ENCODE measurements at regions of chr12 and their contacts with region 1.

Region 1: GRCh38 chr12:95532851-95533250 is 18.4 kb downstream of the USP44 start:
- DNase-seq: peak; percentile 33
- H3K4me3 Mint-ChIP-seq: no peak overlapping the region
- H3K27ac Mint-ChIP-seq: no peak overlapping the region
- H3K4me1 Mint-ChIP-seq: peaks cover 8% of the 10 kb centered on the region
- H3K27me3 Mint-ChIP-seq: no peaks in the 10 kb centered on the region

Region 2: DNA sequence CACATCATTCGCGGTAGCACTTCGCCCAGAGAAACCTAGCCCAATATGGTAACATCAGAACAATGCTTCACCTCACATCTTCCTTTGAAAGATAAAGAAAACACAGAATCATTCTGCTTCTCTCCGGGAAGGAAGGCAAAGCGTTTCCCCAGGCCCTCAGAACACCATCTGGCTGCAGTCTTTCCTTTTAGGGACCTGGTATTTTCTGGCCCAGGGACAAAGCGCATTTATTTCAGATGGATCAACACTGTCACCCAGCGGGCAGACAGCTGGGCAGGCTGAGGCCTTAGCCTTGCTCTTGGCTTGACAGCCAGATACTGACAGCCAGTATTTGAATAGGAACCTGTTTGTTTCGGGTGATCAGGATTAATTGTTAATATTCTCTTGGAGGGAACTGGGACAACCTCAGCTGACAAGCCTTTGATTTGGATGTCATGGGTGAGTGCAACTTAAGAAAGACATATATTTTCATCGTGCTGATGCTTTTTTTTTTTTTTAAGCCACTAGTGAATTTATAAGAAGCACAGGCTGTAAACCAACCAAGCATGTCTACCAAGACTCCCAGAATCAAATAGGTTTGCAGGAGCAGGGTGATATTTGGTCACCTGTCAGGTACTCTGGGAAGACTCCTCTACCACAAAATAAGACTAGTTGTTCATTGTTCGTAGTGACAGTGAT is 196.3 kb before region 1 on chr12:
- CTCF ChIA-PET with region 1: interaction called, 4 read pairs
- POLR2A ChIA-PET with region 1: no interaction called
- intact Hi-C with region 1: loop called (anchors 10 kb)
- DNase-seq: no peak
- H3K4me3 Mint-ChIP-seq: no peak overlapping the region
- H3K27ac Mint-ChIP-seq: no peak overlapping the region
- H3K4me1 Mint-ChIP-seq: peaks cover 3% of the 10 kb centered on the region
- H3K27me3 Mint-ChIP-seq: peaks cover 2% of the 10 kb centered on the region

Region 3: GRCh38 chr12:95548539-95549391 is 15.9 kb after region 1 on chr12:
- CTCF ChIA-PET with region 1: interaction called, 12 read pairs
- POLR2A ChIA-PET with region 1: no interaction called
- intact Hi-C with region 1: no loop called
- DNase-seq: peak; percentile 71
- H3K4me3 Mint-ChIP-seq: peak overlapping the region; percentile 85
- H3K27ac Mint-ChIP-seq: peak overlapping the region; percentile 7
- H3K4me1 Mint-ChIP-seq: peaks cover 26% of the 10 kb centered on the region
- H3K27me3 Mint-ChIP-seq: peaks cover 20% of the 10 kb centered on the region